ENCODE measurements at regions of chr3 and their contacts with region 1.

Region 1: GRCh38 chr3:58336135-58336882 is 3.6 kb downstream of the PXK start:
- DNase-seq: no peak
- ATAC-seq: no peak
- H3K4me3 ChIP-seq: no peak overlapping the region
- H3K27ac ChIP-seq: no peak overlapping the region
- H3K4me1 ChIP-seq: peaks cover 8% of the 10 kb centered on the region
- H3K27me3 ChIP-seq: no peaks in the 10 kb centered on the region
- CTCF ChIP-seq: no peak

Region 2: GRCh38 chr3:57682284-57682683 is 654.0 kb before region 1 on chr3:
- CTCF ChIA-PET with region 1: no interaction called
- POLR2A ChIA-PET with region 1: no interaction called
- in situ Hi-C with region 1: no loop called
- intact Hi-C with region 1: no loop called
- DNase-seq: no peak
- ATAC-seq: no peak
- H3K4me3 ChIP-seq: no peak overlapping the region
- H3K27ac ChIP-seq: no peak overlapping the region
- H3K4me1 ChIP-seq: no peaks in the 10 kb centered on the region
- H3K27me3 ChIP-seq: no peaks in the 10 kb centered on the region
- CTCF ChIP-seq: no peak

Region 3: GRCh38 chr3:58217209-58217811 is 119.0 kb before region 1 on chr3:
- CTCF ChIA-PET with region 1: no interaction called
- POLR2A ChIA-PET with region 1: no interaction called
- in situ Hi-C with region 1: no loop called
- intact Hi-C with region 1: no loop called
- DNase-seq: peak; percentile 79
- ATAC-seq: peak; percentile 96
- H3K4me3 ChIP-seq: peak overlapping the region; percentile 5 to 45; a peak in 2 of 4 replicates
- H3K27ac ChIP-seq: peak overlapping the region; percentile 17; the same call in 1 of the 2 replicates
- H3K4me1 ChIP-seq: peaks cover 11% of the 10 kb centered on the region
- H3K27me3 ChIP-seq: no peaks in the 10 kb centered on the region
- CTCF ChIP-seq: peak; percentile 87

Region 4: DNA sequence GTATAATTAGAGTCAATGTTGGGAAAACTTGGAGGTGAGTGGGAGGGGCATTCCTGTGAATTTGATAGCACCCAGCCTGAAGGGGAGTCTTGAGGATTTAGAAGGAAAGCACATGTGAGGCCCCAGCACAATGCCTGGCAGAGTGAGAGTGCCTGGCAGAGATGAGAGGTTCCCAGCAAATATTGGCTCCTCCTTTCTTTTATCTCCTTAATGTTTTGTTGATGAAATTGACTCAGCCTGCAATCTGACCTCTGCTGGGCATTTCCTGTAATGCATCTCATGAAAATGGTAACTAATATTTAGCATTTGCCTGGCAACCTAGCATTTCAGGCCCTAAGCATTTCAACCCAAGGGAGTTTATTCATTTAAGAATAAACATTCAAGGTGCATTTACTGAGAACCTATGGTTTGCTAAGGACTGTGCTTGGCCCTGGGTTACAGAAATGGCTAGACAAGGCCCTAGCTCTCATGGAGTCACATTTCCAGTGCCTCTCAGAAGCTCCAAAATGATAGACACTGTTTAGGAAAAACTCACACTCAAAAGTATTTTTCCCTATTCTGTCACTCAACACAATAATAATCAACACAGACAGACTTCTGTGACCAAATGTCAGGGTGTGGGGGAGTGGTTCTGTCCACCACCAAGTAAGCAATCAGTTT is 78.4 kb after region 1 on chr3:
- CTCF ChIA-PET with region 1: no interaction called
- POLR2A ChIA-PET with region 1: no interaction called
- in situ Hi-C with region 1: no loop called
- intact Hi-C with region 1: loop called (anchors 5 kb)
- DNase-seq: no peak
- ATAC-seq: peak; percentile 72
- H3K4me3 ChIP-seq: no peak overlapping the region
- H3K27ac ChIP-seq: no peak overlapping the region
- H3K4me1 ChIP-seq: no peaks in the 10 kb centered on the region
- H3K27me3 ChIP-seq: no peaks in the 10 kb centered on the region
- CTCF ChIP-seq: peak; percentile 76